Right lobe of liver (tissue), 6 donors: ENCODE measurements at regions of chr22 and their contacts with region 1.

Region 1: DNA sequence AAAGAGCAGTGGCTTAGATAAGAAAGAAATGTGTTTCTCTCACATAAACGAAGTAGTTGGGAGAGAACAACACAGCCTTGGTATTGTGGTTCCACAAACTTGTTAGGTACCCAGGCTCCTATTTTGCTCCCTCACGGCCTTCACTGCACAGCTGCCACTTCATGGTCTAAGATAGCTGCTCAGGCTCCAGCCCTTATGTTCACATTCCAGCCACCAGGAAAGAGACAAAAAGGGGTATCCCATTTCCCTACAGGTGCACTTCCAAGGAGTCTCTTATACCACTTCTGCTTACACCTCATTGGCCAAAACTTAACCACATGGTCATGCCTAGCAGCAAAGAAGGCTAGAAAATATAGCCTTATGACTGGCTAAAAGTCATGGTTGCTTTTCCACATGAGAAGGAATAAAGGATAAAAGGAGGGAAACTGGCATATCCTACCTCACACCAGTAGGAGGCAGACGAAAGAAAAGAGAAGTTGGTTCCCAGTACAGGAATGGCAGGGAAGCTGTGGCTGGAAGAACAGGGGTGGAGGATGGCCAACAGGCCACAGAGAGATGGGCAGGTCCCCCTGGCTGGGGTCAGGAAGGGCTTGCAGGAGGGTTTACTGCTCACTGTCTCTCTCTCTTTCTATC is 5.4 kb upstream of the HDHD5 start:
- DNase-seq: no peak
- ATAC-seq: no peak
- H3K4me3 ChIP-seq: no peak overlapping the region
- H3K27ac ChIP-seq: no peak overlapping the region
- H3K4me1 ChIP-seq: peaks cover 0 to 28% (median 9%) of the 10 kb centered on the region in 4 donors
- H3K27me3 ChIP-seq: no peaks in the 10 kb centered on the region
- CTCF ChIP-seq: peak in 1 of 4 donors; percentile 13
- POLR2A ChIP-seq: no peak

Region 2: GRCh38 chr22:17084554-17085276 is 79.8 kb before region 1 on chr22 and contains the start of gene IL17RA:
- intact Hi-C with region 1: loop called in 1 of 2 experiments (anchors 10 kb)
- DNase-seq: peak; percentile 94 to 96 (median 96)
- ATAC-seq: peak; percentile 99 to 100 (median 99)
- H3K4me3 ChIP-seq: peak within 1 kb of the TSS; percentile 97 to 99 (median 99)
- H3K27ac ChIP-seq: peak within 1 kb of the TSS; percentile 72 to 90 (median 88)
- H3K4me1 ChIP-seq: no peaks in the 10 kb centered on the region
- H3K27me3 ChIP-seq: no peaks in the 10 kb centered on the region
- CTCF ChIP-seq: no peak
- POLR2A ChIP-seq: peak; percentile 87
- total RNA-seq, gene IL17RA: 7.1 to 13.6 (median 9.6) TPM

Region 3: DNA sequence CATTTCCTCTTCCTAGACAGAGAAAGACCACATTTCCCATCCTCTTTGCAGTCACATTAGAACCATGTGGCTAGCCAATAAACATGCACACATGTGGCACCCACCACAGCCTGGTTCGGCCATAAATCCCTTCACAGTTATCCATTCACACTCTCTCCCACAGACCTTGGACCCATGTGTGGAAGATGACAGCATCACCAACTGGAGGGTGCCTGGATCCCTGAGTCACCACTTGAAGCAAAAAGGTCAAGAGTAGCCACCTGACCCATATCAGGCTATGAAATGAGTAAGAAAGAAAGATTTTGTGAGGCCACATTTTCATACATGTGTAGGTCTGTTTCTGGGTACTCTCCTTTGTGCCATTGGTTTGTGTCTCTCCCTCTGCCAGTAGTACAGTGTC is 34.3 kb before region 1 on chr22:
- intact Hi-C with region 1: no loop called
- DNase-seq: no peak
- ATAC-seq: no peak
- H3K4me3 ChIP-seq: no peak overlapping the region
- H3K27ac ChIP-seq: no peak overlapping the region
- H3K4me1 ChIP-seq: no peaks in the 10 kb centered on the region
- H3K27me3 ChIP-seq: no peaks in the 10 kb centered on the region
- CTCF ChIP-seq: no peak
- POLR2A ChIP-seq: no peak

Region 4: GRCh38 chr22:17258015-17258787 is 93.7 kb after region 1 on chr22:
- intact Hi-C with region 1: no loop called
- DNase-seq: peak; percentile 57 to 59 (median 57)
- ATAC-seq: peak; percentile 67 to 95 (median 92)
- H3K4me3 ChIP-seq: peak overlapping the region in 1 of 3 donors; percentile 35
- H3K27ac ChIP-seq: peak overlapping the region in 1 of 3 donors; percentile 58
- H3K4me1 ChIP-seq: peaks cover 0 to 4% (median 0%) of the 10 kb centered on the region in 4 donors
- H3K27me3 ChIP-seq: no peaks in the 10 kb centered on the region
- CTCF ChIP-seq: no peak
- POLR2A ChIP-seq: no peak